ENCODE measurements at regions of chr4 and their contacts with region 1.

Region 1: GRCh38 chr4:70839589-70840093 is at the start of gene GRSF1:
- DNase-seq: no peak
- ATAC-seq: peak; percentile 96
- H3K4me3 ChIP-seq: peak within 1 kb of the TSS; percentile 82 to 86
- H3K27ac ChIP-seq: peak within 1 kb of the TSS; percentile 89
- H3K4me1 ChIP-seq: peaks cover 6% of the 10 kb centered on the region; the same call in 1 of the 2 replicates
- H3K27me3 ChIP-seq: no peaks in the 10 kb centered on the region
- CTCF ChIP-seq: no peak
- total RNA-seq, gene GRSF1: 59.9 TPM

Region 2: DNA sequence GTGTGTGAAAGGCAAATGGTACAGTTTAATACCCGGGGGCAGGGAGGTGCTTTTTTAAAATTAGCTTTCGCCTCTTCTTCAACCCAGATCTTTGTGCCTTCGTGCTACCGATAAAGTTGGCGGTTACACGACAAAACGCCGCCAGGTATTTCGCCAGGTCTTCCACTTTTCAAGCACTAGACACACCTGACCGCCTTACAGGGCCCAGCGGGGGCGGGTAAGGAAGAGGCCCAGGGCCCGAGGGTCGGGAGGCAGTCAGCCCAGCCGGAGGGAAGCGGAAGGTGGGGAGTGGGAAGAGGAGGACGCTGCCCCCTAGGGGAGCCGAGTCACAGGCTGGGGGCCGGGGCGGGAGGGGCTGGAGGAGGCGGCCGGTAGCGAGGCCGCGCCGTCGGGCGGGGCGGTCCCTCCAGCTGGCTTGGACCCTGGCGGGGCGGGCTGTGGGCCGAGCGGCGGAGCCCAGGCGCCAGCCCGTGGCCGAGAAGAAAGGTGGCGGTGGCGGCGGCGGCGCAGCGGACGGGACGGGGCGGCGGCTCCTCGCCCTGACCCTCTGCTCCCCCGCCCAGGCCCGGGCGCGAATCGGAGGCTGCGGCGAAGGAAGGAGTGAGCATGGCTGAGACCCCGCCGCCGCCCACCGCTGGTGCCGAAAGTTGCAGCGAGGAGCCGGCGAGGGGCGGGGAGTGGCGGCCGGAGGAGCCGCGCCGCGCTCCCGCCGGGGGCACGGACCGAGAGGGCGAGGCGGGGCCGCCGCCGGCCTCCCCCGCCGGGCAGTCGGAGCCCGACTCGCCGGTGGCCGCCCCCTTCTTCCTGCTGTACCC is 135.1 kb before region 1 on chr4:
- CTCF ChIA-PET with region 1: no interaction called
- POLR2A ChIA-PET with region 1: interaction called, 12 read pairs
- in situ Hi-C with region 1: no loop called
- intact Hi-C with region 1: no loop called
- DNase-seq: no peak
- ATAC-seq: peak; percentile 89
- H3K4me3 ChIP-seq: peak overlapping the region; percentile 67 to 82
- H3K27ac ChIP-seq: peak overlapping the region; percentile 87
- H3K4me1 ChIP-seq: peaks cover 17% of the 10 kb centered on the region
- H3K27me3 ChIP-seq: no peaks in the 10 kb centered on the region
- CTCF ChIP-seq: peak; percentile 71

Region 3: DNA sequence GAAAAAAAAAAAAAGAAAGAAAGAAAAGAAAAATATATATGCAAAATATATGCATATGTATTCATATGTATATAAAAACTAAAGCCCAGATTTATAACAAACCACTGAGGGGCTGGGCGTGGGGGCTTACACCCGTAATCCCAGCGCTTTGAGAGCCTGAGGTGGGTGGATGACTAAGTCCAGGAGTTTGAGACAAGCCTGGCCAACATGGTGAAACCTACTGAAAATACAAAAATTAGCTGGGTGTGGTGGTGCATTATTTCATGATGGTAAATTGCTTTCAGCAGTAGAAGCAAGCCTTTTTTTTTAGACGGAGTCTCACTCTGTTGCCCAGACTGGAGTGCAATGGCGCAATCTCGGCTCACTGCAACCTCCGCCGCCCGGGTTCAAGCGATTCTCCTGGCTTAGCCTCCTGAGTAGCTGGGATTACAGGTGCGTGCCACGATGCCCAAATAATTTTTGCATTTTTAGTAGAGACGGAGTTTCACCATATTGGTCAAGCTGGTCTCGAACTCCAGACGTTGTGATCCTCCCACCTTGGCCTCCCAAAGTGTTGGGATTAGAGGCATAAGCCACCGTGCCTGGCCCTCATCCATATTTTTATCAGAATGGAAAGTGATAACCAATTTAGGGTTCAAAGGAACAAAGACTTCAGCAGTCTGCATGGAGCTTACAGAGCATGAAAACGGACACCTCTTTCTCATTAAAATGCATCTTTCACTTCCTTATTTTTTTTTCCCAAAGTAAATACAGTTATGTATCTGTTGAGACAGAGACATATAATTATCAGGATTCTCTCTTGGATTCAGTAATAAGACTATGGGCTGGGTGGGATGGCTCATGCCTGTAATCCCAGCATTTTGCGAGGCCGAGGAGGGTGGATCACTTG is 34.9 kb after region 1 on chr4:
- CTCF ChIA-PET with region 1: no interaction called
- POLR2A ChIA-PET with region 1: interaction called, 16 read pairs
- in situ Hi-C with region 1: no loop called
- intact Hi-C with region 1: no loop called
- DNase-seq: no peak
- ATAC-seq: no peak
- H3K4me3 ChIP-seq: no peak overlapping the region
- H3K27ac ChIP-seq: no peak overlapping the region
- H3K4me1 ChIP-seq: no peaks in the 10 kb centered on the region
- H3K27me3 ChIP-seq: no peaks in the 10 kb centered on the region
- CTCF ChIP-seq: no peak

Region 4: GRCh38 chr4:71009890-71010588 is 170.4 kb after region 1 on chr4:
- CTCF ChIA-PET with region 1: interaction called, 12 read pairs
- POLR2A ChIA-PET with region 1: no interaction called
- in situ Hi-C with region 1: no loop called
- intact Hi-C with region 1: loop called (anchors 10 kb)
- DNase-seq: peak; percentile 27
- ATAC-seq: no peak
- H3K4me3 ChIP-seq: no peak overlapping the region
- H3K27ac ChIP-seq: no peak overlapping the region
- H3K4me1 ChIP-seq: no peaks in the 10 kb centered on the region
- H3K27me3 ChIP-seq: no peaks in the 10 kb centered on the region
- CTCF ChIP-seq: peak; percentile 60; the same call in 1 of the 2 replicates